Vagina (tissue), 2 donors: ENCODE measurements at regions of chrX and their contacts with region 1.

Region 1: GRCh38 chrX:119693040-119693995 is at the start of gene SEPTIN6:
- DNase-seq: no peak
- H3K4me3 ChIP-seq: peak within 1 kb of the TSS; percentile 53 to 58
- H3K27ac ChIP-seq: peak within 1 kb of the TSS; percentile 78
- H3K4me1 ChIP-seq: peaks cover 8% of the 10 kb centered on the region
- H3K27me3 ChIP-seq: no peaks in the 10 kb centered on the region
- CTCF ChIP-seq: no peak
- POLR2A ChIP-seq: peak in 1 of 2 donors; percentile 26
- total RNA-seq, gene SEPTIN6: 25.8 TPM

Region 2: DNA sequence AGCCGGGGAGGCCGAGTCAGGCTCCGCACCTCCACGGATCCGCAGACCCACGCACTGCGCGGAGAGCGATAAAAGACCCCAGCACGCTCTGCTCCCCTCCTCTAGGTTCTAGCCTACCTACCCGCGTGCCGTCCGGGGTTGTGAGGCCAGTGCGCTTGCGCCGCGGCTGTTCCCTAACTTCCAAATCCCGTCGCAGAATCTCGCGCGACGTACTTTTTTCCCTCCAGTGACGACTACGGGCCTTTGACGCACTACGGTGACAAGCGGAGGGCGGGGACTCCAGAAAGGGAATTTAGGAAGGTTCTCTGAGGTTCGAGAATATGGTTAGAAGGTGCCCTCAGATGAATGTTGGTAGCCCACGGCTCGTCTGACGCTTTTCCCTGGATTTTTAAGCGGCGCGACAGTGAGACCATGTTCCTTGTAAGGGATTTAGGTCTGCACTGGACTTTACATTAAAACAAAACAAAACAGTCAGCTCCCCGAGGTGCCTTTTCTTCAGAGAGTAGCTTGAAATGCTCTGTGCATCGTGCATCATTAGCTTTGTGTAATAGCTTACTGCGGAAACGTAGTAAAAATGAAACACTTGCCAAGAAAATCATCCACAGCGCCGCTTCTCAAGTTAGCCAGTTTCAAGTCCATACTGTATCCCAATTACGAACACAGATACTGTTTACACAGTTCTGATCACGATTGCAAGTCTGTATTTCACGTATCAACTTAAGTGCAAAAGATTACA is 86.9 kb before region 1 on chrX and contains the start of gene NKRF:
- intact Hi-C with region 1: loop called (anchors 10 kb)
- DNase-seq: peak in 1 of 2 donors; percentile 90
- H3K4me3 ChIP-seq: peak within 1 kb of the TSS; percentile 67 to 76
- H3K27ac ChIP-seq: peak within 1 kb of the TSS; percentile 95
- H3K4me1 ChIP-seq: no peaks in the 10 kb centered on the region
- H3K27me3 ChIP-seq: no peaks in the 10 kb centered on the region
- CTCF ChIP-seq: no peak
- POLR2A ChIP-seq: peak; percentile 69 to 75
- total RNA-seq, gene NKRF: 9.8 TPM